B cell (primary cell): ENCODE measurements at regions of chr3 and their contacts with region 1.

Region 1: GRCh38 chr3:119559441-119559963 is at the start of gene CD80:
- DNase-seq: peak; percentile 85
- ATAC-seq: peak; percentile 60
- H3K4me3 ChIP-seq: peak within 1 kb of the TSS in 4 of 5 experiments; percentile 42 to 71 (median 60)
- H3K4me3 Mint-ChIP-seq: peak within 1 kb of the TSS; percentile 75
- H3K27ac ChIP-seq: peak within 1 kb of the TSS; percentile 71 to 92
- H3K27ac Mint-ChIP-seq: peak within 1 kb of the TSS; percentile 91
- H3K4me1 ChIP-seq: peaks cover 49 to 71% of the 10 kb centered on the region in 2 donors
- H3K4me1 Mint-ChIP-seq: peaks cover 80% of the 10 kb centered on the region
- H3K27me3 ChIP-seq: no peaks in the 10 kb centered on the region
- H3K27me3 Mint-ChIP-seq: no peaks in the 10 kb centered on the region
- CTCF ChIP-seq: peak; percentile 58
- total RNA-seq, gene CD80: 26.5 and 28.0 TPM in 2 replicates

Region 2: DNA sequence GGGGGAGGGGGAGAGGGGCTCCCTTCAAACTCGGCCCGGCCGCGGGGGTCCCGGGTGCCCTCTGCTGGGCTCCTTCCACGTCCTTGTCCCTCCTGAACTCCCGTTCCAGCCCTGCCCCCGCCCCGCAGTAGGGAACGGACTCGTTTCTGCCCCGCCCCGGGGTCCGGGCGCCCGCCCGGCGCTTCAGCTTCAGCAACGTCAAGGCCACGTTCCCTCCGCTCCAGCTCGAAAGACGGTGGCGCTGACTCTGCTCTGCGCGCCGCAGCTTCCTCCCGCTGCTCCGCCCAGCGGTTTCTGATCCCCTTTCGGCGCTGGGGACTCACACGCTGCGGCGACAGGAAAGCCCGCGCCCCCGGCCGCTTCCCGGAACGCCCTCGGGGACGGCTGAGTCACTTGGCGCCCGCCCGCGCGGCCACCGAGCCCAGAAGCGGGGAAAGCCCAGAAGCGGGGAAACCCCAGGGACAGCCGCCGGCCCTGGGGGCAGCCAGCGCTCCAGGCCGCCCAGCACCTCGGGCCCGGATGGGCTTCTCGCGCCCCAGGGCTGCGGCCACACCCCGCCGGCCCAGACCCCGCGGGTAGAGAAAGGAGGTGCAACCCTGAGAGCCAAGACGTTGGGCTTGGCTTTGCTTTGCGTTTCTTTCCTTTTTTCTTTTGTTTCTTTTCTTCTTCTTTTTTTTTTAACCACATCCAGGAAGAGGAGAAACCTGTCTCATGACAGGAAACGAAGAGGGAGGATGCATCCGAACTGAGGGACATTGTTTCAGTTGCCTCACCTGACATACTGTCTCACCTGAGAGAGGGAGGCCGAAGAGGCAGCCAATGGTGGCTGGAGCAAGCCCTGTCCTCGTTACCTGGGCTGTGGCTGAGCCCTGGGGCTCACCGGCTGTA is 236.4 kb before region 1 on chr3:
- CTCF ChIA-PET with region 1: no interaction called
- POLR2A ChIA-PET with region 1: no interaction called
- intact Hi-C with region 1: loop called (anchors 1 kb)
- DNase-seq: peak; percentile 97
- ATAC-seq: peak; percentile 86
- H3K4me3 ChIP-seq: peak overlapping the region; percentile 44 to 86 (median 61)
- H3K4me3 Mint-ChIP-seq: peak overlapping the region; percentile 88
- H3K27ac ChIP-seq: peak overlapping the region; percentile 86 to 87
- H3K27ac Mint-ChIP-seq: peak overlapping the region; percentile 93
- H3K4me1 ChIP-seq: peaks cover 13 to 22% of the 10 kb centered on the region in 2 donors
- H3K4me1 Mint-ChIP-seq: peaks cover 48% of the 10 kb centered on the region
- H3K27me3 ChIP-seq: no peaks in the 10 kb centered on the region
- H3K27me3 Mint-ChIP-seq: no peaks in the 10 kb centered on the region
- CTCF ChIP-seq: no peak

Region 3: DNA sequence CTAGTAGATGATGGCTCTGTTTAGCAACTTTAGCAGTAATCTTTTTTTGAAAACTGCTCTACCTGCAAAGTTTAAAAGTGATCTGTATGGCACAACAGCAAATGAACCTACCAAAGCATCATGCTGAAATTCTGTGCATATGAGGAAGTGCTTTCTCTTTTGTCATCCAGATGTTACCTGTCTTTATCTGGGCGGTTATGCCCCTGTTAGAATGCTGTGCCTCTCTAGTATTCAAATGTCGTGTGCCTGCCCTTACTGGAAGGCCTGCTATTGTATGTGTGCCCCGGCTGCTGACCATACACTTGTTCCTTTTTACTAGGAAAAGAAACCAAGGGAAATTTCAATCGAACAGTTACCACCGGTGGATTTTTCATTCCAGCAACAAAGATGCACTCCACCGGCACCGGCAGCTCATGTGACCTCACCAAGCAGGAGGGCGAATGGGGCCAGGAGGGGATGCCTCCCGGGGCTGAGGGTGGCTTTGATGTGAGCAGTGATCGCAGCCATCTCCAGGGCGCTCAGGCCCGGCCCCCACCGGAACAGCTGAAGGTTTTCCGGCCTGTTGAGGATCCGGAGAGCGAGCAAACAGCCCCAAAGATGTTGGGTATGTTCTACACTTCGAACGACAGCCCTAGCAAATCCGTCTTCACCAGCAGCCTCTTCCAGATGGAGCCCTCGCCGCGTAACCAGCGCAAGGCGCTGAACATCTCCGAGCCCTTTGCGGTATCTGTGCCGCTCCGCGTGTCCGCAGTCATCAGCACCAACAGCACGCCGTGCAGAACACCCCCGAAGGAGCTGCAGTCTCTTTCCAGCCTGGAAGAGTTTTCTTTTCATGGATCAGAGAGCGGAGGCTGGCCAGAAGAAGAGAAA is 157.8 kb before region 1 on chr3:
- CTCF ChIA-PET with region 1: no interaction called
- POLR2A ChIA-PET with region 1: no interaction called
- intact Hi-C with region 1: no loop called
- DNase-seq: peak; percentile 12
- ATAC-seq: peak; percentile 39
- H3K4me3 ChIP-seq: no peak overlapping the region
- H3K4me3 Mint-ChIP-seq: peak overlapping the region; percentile 66
- H3K27ac ChIP-seq: peak overlapping the region; percentile 43 to 52
- H3K27ac Mint-ChIP-seq: peak overlapping the region; percentile 64
- H3K4me1 ChIP-seq: peaks cover 0 to 11% of the 10 kb centered on the region in 2 donors
- H3K4me1 Mint-ChIP-seq: peaks cover 9% of the 10 kb centered on the region
- H3K27me3 ChIP-seq: no peaks in the 10 kb centered on the region
- H3K27me3 Mint-ChIP-seq: no peaks in the 10 kb centered on the region
- CTCF ChIP-seq: no peak

Region 4: GRCh38 chr3:119485563-119485962 is 73.9 kb before region 1 on chr3:
- CTCF ChIA-PET with region 1: no interaction called
- POLR2A ChIA-PET with region 1: no interaction called
- intact Hi-C with region 1: no loop called
- DNase-seq: no peak
- ATAC-seq: no peak
- H3K4me3 ChIP-seq: no peak overlapping the region
- H3K4me3 Mint-ChIP-seq: no peak overlapping the region
- H3K27ac ChIP-seq: no peak overlapping the region
- H3K27ac Mint-ChIP-seq: no peak overlapping the region
- H3K4me1 ChIP-seq: no peaks in the 10 kb centered on the region
- H3K4me1 Mint-ChIP-seq: no peaks in the 10 kb centered on the region
- H3K27me3 ChIP-seq: no peaks in the 10 kb centered on the region
- H3K27me3 Mint-ChIP-seq: no peaks in the 10 kb centered on the region
- CTCF ChIP-seq: no peak

Region 5: GRCh38 chr3:119498186-119498987 is 61.1 kb before region 1 on chr3 and contains the start of gene TIMMDC1:
- CTCF ChIA-PET with region 1: interaction called, 11 read pairs
- POLR2A ChIA-PET with region 1: interaction called, 4 read pairs
- intact Hi-C with region 1: loop called (anchors 1 kb)
- DNase-seq: peak; percentile 97
- ATAC-seq: peak; percentile 99
- H3K4me3 ChIP-seq: peak within 1 kb of the TSS; percentile 86 to 98 (median 94)
- H3K4me3 Mint-ChIP-seq: peak within 1 kb of the TSS; percentile 100
- H3K27ac ChIP-seq: peak within 1 kb of the TSS; percentile 82 to 91
- H3K27ac Mint-ChIP-seq: peak within 1 kb of the TSS; percentile 98
- H3K4me1 ChIP-seq: peaks cover 16 to 18% of the 10 kb centered on the region in 2 donors
- H3K4me1 Mint-ChIP-seq: peaks cover 26% of the 10 kb centered on the region
- H3K27me3 ChIP-seq: no peaks in the 10 kb centered on the region
- H3K27me3 Mint-ChIP-seq: no peaks in the 10 kb centered on the region
- CTCF ChIP-seq: no peak
- total RNA-seq, gene TIMMDC1: 58.5 and 70.9 TPM in 2 replicates

Region 6: DNA sequence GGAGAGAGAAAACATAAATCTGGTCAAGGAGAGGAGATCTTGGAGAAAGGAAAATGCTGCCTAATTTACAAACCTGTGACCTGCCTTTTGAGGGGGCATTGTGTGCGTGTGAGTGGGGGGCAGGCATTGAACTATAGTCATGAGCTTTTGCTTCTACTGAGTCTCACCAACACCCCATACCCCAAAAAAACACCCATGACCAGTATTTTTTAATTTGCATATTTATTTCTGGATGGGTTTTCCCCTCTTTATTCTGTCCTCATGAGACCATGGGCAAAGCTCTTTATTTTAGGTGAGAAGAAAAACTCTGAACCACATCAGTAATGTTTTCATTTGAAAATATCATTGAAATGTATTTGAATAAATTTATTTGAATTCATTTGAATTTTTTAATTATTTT is 20.7 kb before region 1 on chr3:
- CTCF ChIA-PET with region 1: interaction called, 3 read pairs
- POLR2A ChIA-PET with region 1: interaction called, 5 read pairs
- intact Hi-C with region 1: loop called (anchors 2 kb)
- DNase-seq: peak; percentile 52
- ATAC-seq: peak; percentile 78
- H3K4me3 ChIP-seq: no peak overlapping the region
- H3K4me3 Mint-ChIP-seq: peak overlapping the region; percentile 71
- H3K27ac ChIP-seq: peak overlapping the region; percentile 57 to 83
- H3K27ac Mint-ChIP-seq: peak overlapping the region; percentile 80
- H3K4me1 ChIP-seq: peaks cover 24 to 26% of the 10 kb centered on the region in 2 donors
- H3K4me1 Mint-ChIP-seq: peaks cover 45% of the 10 kb centered on the region
- H3K27me3 ChIP-seq: no peaks in the 10 kb centered on the region
- H3K27me3 Mint-ChIP-seq: no peaks in the 10 kb centered on the region
- CTCF ChIP-seq: no peak

Region 7: GRCh38 chr3:119598410-119599098 is 39.1 kb after region 1 on chr3:
- CTCF ChIA-PET with region 1: no interaction called
- POLR2A ChIA-PET with region 1: interaction called, 4 read pairs
- intact Hi-C with region 1: loop called (anchors 5 kb)
- DNase-seq: no peak
- ATAC-seq: no peak
- H3K4me3 ChIP-seq: no peak overlapping the region
- H3K4me3 Mint-ChIP-seq: no peak overlapping the region
- H3K27ac ChIP-seq: no peak overlapping the region
- H3K27ac Mint-ChIP-seq: no peak overlapping the region
- H3K4me1 ChIP-seq: peaks cover 7 to 15% of the 10 kb centered on the region in 2 donors
- H3K4me1 Mint-ChIP-seq: peaks cover 37% of the 10 kb centered on the region
- H3K27me3 ChIP-seq: no peaks in the 10 kb centered on the region
- H3K27me3 Mint-ChIP-seq: no peaks in the 10 kb centered on the region
- CTCF ChIP-seq: no peak

Region 8: DNA sequence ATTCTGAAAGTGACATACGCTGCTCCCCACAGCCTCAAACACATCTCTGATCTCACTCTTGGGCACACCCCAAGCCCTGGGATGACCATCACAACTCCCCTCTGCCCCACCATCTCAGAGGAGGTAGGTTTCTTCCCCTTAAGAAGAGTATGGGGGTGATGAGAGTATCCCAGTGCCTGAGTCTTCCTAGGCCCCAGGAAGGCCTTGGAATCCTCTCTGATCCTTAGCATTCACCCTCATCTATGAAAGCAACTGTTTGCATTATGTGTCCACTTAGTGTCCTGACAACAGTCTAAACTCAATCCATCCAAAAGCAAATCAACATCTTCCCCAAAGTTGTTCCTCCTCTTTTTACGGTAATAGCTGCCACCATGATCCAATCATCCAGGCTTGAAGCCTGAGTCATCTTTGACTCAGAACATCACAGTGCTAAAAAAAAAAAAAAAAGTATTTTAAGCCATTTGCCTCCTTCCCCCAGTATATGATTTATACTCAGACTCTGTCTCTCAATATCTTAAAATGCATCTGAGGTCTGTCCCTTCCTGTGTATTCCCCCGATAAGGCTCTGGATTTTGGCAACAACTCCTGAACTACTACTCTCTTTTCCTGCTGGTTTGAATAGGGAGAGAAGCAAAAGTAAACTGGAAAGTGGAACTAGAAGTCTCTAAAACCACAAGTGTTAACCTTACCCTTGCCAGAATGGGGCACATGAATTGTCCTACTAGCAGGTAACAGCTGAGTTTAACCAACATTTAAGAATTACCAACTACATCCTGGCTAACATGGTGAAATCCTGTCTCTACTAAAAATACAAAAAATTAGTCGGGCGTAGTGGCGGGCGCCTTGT is 78.4 kb after region 1 on chr3:
- CTCF ChIA-PET with region 1: no interaction called
- POLR2A ChIA-PET with region 1: interaction called, 14 read pairs
- intact Hi-C with region 1: loop called (anchors 2 kb)
- DNase-seq: peak; percentile 65
- ATAC-seq: peak; percentile 60
- H3K4me3 ChIP-seq: peak overlapping the region in 2 of 5 experiments; percentile 29 to 30
- H3K4me3 Mint-ChIP-seq: peak overlapping the region; percentile 85
- H3K27ac ChIP-seq: peak overlapping the region in 1 of 2 donors; percentile 65
- H3K27ac Mint-ChIP-seq: peak overlapping the region; percentile 97
- H3K4me1 ChIP-seq: peaks cover 16 to 20% of the 10 kb centered on the region in 2 donors
- H3K4me1 Mint-ChIP-seq: peaks cover 24% of the 10 kb centered on the region
- H3K27me3 ChIP-seq: no peaks in the 10 kb centered on the region
- H3K27me3 Mint-ChIP-seq: no peaks in the 10 kb centered on the region
- CTCF ChIP-seq: no peak

Region 9: GRCh38 chr3:120554812-120555606 is 995.5 kb after region 1 on chr3:
- CTCF ChIA-PET with region 1: no interaction called
- POLR2A ChIA-PET with region 1: no interaction called
- intact Hi-C with region 1: no loop called
- DNase-seq: no peak
- ATAC-seq: no peak
- H3K4me3 ChIP-seq: no peak overlapping the region
- H3K4me3 Mint-ChIP-seq: no peak overlapping the region
- H3K27ac ChIP-seq: no peak overlapping the region
- H3K27ac Mint-ChIP-seq: no peak overlapping the region
- H3K4me1 ChIP-seq: peaks cover 12 to 15% of the 10 kb centered on the region in 2 donors
- H3K4me1 Mint-ChIP-seq: peaks cover 15% of the 10 kb centered on the region
- H3K27me3 ChIP-seq: peaks cover 0 to 17% (median 8%) of the 10 kb centered on the region in 4 experiments
- H3K27me3 Mint-ChIP-seq: peaks cover 22% of the 10 kb centered on the region
- CTCF ChIP-seq: no peak